Mammary epithelial cell (primary cell): ENCODE measurements at regions of chr9 and their contacts with region 1.

Region 1: DNA sequence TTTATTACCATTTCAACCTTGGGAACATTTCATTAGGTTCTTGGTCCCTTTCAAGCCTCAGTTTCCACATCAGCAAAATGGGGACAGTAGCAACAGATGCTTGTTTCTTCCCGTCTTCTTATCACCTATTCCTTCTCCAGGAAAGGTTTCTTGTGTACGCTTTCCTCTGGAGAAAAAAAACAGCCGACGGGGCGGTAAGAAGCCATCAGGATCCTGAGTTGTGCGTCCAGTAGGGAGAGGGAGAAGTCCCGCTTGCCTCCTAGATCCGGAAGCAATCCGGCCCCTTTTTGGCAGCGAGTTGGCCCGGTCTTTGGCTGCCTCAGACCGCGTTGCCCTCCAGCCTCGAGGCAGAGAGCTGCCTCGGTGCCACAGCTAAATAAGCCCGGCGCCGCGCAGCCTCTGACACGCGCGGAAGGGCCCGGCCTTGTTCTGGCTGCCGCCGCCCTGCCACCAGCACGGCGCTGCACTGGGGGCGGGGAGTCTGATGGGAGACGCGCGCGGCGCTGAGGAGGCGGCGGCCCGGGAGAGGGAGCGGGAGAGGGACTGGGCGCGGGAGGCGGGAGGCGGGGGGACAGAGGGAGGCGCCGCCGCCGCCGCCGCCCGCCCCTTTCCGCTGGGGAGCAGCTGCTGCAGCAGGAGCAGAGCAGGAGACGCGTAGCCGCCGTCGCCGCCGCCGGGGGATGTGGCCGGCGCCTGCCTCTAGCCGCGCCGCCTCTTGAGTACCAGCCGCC is at the start of gene SLC44A1:
- DNase-seq: peak; percentile 97
- H3K4me3 ChIP-seq: peak within 1 kb of the TSS; percentile 80 to 98 (median 84)
- H3K27ac ChIP-seq: peak within 1 kb of the TSS; percentile 86
- H3K4me1 ChIP-seq: peaks cover 7% of the 10 kb centered on the region
- H3K27me3 ChIP-seq: peaks cover 2% of the 10 kb centered on the region
- CTCF ChIP-seq: no peak
- total RNA-seq, gene SLC44A1: 29.1 to 35.7 TPM

Region 2: GRCh38 chr9:104361207-104361606 is 883.0 kb before region 1 on chr9:
- CTCF ChIA-PET with region 1: no interaction called
- dilution Hi-C with region 1: no loop called
- in situ Hi-C with region 1: no loop called
- intact Hi-C with region 1: no loop called
- DNase-seq: no peak
- H3K4me3 ChIP-seq: no peak overlapping the region
- H3K27ac ChIP-seq: no peak overlapping the region
- H3K4me1 ChIP-seq: no peaks in the 10 kb centered on the region
- H3K27me3 ChIP-seq: no peaks in the 10 kb centered on the region
- CTCF ChIP-seq: no peak

Region 3: GRCh38 chr9:104863180-104863883 is 380.8 kb before region 1 on chr9:
- CTCF ChIA-PET with region 1: no interaction called
- dilution Hi-C with region 1: no loop called
- in situ Hi-C with region 1: no loop called
- intact Hi-C with region 1: loop called (anchors 5 kb)
- DNase-seq: peak; percentile 69
- H3K4me3 ChIP-seq: no peak overlapping the region
- H3K27ac ChIP-seq: no peak overlapping the region
- H3K4me1 ChIP-seq: peaks cover 27% of the 10 kb centered on the region
- H3K27me3 ChIP-seq: no peaks in the 10 kb centered on the region
- CTCF ChIP-seq: peak; percentile 85 to 94

Region 4: GRCh38 chr9:105007143-105007542 is 237.0 kb before region 1 on chr9:
- CTCF ChIA-PET with region 1: no interaction called
- dilution Hi-C with region 1: no loop called
- in situ Hi-C with region 1: no loop called
- intact Hi-C with region 1: loop called (anchors 10 kb)
- DNase-seq: peak; percentile 89
- H3K4me3 ChIP-seq: no peak overlapping the region
- H3K27ac ChIP-seq: peak overlapping the region; percentile 26
- H3K4me1 ChIP-seq: peaks cover 15% of the 10 kb centered on the region
- H3K27me3 ChIP-seq: no peaks in the 10 kb centered on the region
- CTCF ChIP-seq: no peak

Region 5: GRCh38 chr9:105191508-105192121 is 52.6 kb before region 1 on chr9:
- CTCF ChIA-PET with region 1: no interaction called
- dilution Hi-C with region 1: no loop called
- in situ Hi-C with region 1: no loop called
- intact Hi-C with region 1: loop called (anchors 2 kb)
- DNase-seq: no peak
- H3K4me3 ChIP-seq: no peak overlapping the region
- H3K27ac ChIP-seq: no peak overlapping the region
- H3K4me1 ChIP-seq: no peaks in the 10 kb centered on the region
- H3K27me3 ChIP-seq: no peaks in the 10 kb centered on the region
- CTCF ChIP-seq: no peak

Region 6: GRCh38 chr9:105296889-105297288 is 52.7 kb after region 1 on chr9:
- CTCF ChIA-PET with region 1: interaction called, 3 read pairs
- dilution Hi-C with region 1: no loop called
- in situ Hi-C with region 1: no loop called
- intact Hi-C with region 1: loop called (anchors 2 kb)
- DNase-seq: peak; percentile 96
- H3K4me3 ChIP-seq: no peak overlapping the region
- H3K27ac ChIP-seq: peak overlapping the region; percentile 82
- H3K4me1 ChIP-seq: peaks cover 34% of the 10 kb centered on the region
- H3K27me3 ChIP-seq: no peaks in the 10 kb centered on the region
- CTCF ChIP-seq: no peak

Region 7: DNA sequence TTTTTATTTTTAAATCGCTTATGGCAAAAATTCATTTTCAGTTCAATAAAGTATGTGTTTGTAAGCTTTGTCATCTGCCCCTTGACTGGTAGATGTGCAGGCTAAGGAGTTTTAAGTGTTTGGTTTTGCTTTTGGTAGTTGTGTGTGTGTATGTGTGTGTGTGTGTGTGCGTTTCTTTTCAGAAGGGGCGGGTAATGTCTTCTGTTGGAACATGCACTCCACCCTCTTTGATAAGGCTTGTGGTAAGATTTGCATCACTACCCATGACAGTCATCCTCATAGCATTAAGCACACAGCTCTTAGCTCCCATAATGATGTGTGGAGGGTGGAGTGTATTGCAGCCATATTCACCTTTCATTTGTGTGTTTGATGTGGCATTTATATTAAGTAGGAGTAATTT is 111.6 kb after region 1 on chr9:
- CTCF ChIA-PET with region 1: no interaction called
- dilution Hi-C with region 1: no loop called
- in situ Hi-C with region 1: no loop called
- intact Hi-C with region 1: loop called (anchors 5 kb)
- DNase-seq: peak; percentile 60
- H3K4me3 ChIP-seq: no peak overlapping the region
- H3K27ac ChIP-seq: no peak overlapping the region
- H3K4me1 ChIP-seq: no peaks in the 10 kb centered on the region
- H3K27me3 ChIP-seq: no peaks in the 10 kb centered on the region
- CTCF ChIP-seq: peak in 1 of 2 donors; percentile 18

Region 8: GRCh38 chr9:105414947-105415661 is 170.9 kb after region 1 on chr9:
- CTCF ChIA-PET with region 1: interaction called, 4 read pairs
- dilution Hi-C with region 1: no loop called
- in situ Hi-C with region 1: loop called (anchors 10 kb)
- intact Hi-C with region 1: loop called (anchors 1 kb)
- DNase-seq: peak; percentile 22
- H3K4me3 ChIP-seq: no peak overlapping the region
- H3K27ac ChIP-seq: no peak overlapping the region
- H3K4me1 ChIP-seq: no peaks in the 10 kb centered on the region
- H3K27me3 ChIP-seq: no peaks in the 10 kb centered on the region
- CTCF ChIP-seq: peak; percentile 71 to 86